Transverse colon (tissue), 4 donors: ENCODE measurements at regions of chr1 and their contacts with region 1.

Region 1: GRCh38 chr1:72530646-72531045 is 248.3 kb upstream of the NEGR1 start:
- DNase-seq: no peak
- H3K4me3 ChIP-seq: no peak overlapping the region
- H3K27ac ChIP-seq: no peak overlapping the region
- H3K4me1 ChIP-seq: no peaks in the 10 kb centered on the region
- H3K27me3 ChIP-seq: no peaks in the 10 kb centered on the region
- CTCF ChIP-seq: no peak
- EP300 ChIP-seq: no peak
- POLR2A ChIP-seq: no peak

Region 2: GRCh38 chr1:72412286-72412685 is 118.4 kb before region 1 on chr1:
- in situ Hi-C with region 1: no loop called
- intact Hi-C with region 1: no loop called
- DNase-seq: no peak
- H3K4me3 ChIP-seq: no peak overlapping the region
- H3K27ac ChIP-seq: no peak overlapping the region
- H3K4me1 ChIP-seq: no peaks in the 10 kb centered on the region
- H3K27me3 ChIP-seq: no peaks in the 10 kb centered on the region
- CTCF ChIP-seq: no peak
- EP300 ChIP-seq: no peak
- POLR2A ChIP-seq: no peak

Region 3: DNA sequence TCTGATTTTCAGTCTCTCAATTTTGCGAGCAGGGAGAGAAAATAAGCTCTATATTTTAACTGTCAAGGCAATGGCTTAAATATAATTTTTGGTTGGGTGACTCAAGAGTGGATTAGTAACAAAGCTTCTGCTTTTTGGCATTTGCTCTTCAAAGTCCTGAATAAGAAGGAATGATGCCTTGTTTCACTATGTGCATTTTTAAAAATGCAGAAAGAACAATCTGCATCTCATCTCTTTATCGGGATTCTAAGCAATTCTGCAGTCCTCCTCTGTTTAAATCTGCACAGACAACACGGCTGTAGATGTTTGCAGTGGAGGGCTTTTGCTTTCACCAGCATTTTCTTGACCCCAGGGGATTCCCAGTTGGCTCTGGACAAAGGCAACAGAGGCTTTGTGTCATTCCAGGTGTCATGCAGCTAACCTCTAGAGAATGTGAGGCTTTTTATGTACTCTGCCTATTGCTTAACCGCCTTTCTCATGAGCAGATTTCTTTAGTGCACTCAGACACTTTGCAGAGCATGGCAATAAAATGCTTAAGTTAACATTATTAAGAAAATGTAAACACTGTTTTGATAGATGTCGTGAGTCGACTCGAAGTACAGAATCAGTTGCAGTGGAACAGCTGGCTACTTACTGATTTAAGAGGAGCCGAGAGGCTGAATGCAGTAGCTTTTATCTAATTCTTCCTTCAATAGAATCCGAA is 534.8 kb after region 1 on chr1:
- in situ Hi-C with region 1: no loop called
- intact Hi-C with region 1: loop called (anchors 10 kb)
- DNase-seq: no peak
- H3K4me3 ChIP-seq: no peak overlapping the region
- H3K27ac ChIP-seq: no peak overlapping the region
- H3K4me1 ChIP-seq: peaks cover 0 to 6% (median 2%) of the 10 kb centered on the region in 4 donors
- H3K27me3 ChIP-seq: no peaks in the 10 kb centered on the region
- CTCF ChIP-seq: no peak
- EP300 ChIP-seq: no peak
- POLR2A ChIP-seq: no peak